Panc1 (cell line): ENCODE measurements at regions of chr13 and their contacts with region 1.

Region 1: GRCh38 chr13:23105051-23105450 is 75.7 kb upstream of the SGCG start:
- DNase-seq: no peak
- ATAC-seq: no peak
- H3K4me3 ChIP-seq: no peak overlapping the region
- H3K27ac ChIP-seq: no peak overlapping the region
- H3K4me1 ChIP-seq: no peaks in the 10 kb centered on the region
- H3K27me3 ChIP-seq: no peaks in the 10 kb centered on the region
- CTCF ChIP-seq: no peak

Region 2: DNA sequence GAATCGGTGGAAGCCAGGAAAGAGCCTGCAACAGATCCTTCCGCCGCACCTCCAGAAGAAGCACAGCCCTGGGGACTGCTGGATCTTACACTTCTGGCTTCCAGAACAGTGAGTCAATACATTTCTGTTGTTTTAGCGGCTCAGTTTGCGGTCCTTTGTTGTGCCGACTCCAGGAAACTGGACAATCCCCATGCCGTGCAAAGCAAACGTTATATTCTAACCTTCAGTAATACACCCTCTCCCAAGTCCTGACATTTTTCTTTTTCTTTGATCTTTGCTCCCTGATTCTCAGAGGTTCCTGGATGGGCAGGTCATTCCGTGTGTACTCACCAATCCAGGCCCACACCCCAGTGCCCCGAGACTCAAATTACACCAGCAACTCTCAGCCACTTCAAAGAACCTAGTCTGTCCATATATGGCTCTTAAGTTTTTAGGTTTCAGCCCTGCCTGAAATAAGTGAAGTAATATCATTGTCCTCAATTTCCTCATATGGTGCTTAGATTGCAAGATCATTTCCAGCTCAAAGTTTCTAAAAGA is 311.4 kb before region 1 on chr13:
- CTCF ChIA-PET with region 1: interaction called, 11 read pairs
- POLR2A ChIA-PET with region 1: no interaction called
- in situ Hi-C with region 1: no loop called
- intact Hi-C with region 1: no loop called
- DNase-seq: no peak
- ATAC-seq: no peak
- H3K4me3 ChIP-seq: no peak overlapping the region
- H3K27ac ChIP-seq: no peak overlapping the region
- H3K4me1 ChIP-seq: no peaks in the 10 kb centered on the region
- H3K27me3 ChIP-seq: no peaks in the 10 kb centered on the region
- CTCF ChIP-seq: no peak

Region 3: GRCh38 chr13:23201870-23202269 is 96.8 kb after region 1 on chr13:
- CTCF ChIA-PET with region 1: no interaction called
- POLR2A ChIA-PET with region 1: no interaction called
- in situ Hi-C with region 1: no loop called
- intact Hi-C with region 1: no loop called
- DNase-seq: no peak
- ATAC-seq: no peak
- H3K4me3 ChIP-seq: no peak overlapping the region
- H3K27ac ChIP-seq: no peak overlapping the region
- H3K4me1 ChIP-seq: no peaks in the 10 kb centered on the region
- H3K27me3 ChIP-seq: no peaks in the 10 kb centered on the region
- CTCF ChIP-seq: no peak